CD4-positive, alpha-beta T cell (primary cell): ENCODE measurements at regions of chr4 and their contacts with region 1.

Region 1: GRCh38 chr4:36255577-36255976 is 11.3 kb upstream of the ARAP2 start:
- DNase-seq: peak; percentile 26 to 94 (median 48)
- ATAC-seq: peak; percentile 97
- H3K4me3 ChIP-seq: no peak overlapping the region
- H3K4me3 Mint-ChIP-seq: peak overlapping the region; percentile 56
- H3K27ac ChIP-seq: peak overlapping the region in 1 of 2 donors; percentile 46
- H3K27ac Mint-ChIP-seq: peak overlapping the region; percentile 50
- H3K4me1 ChIP-seq: peaks cover 15% of the 10 kb centered on the region
- H3K4me1 Mint-ChIP-seq: peaks cover 36% of the 10 kb centered on the region
- H3K27me3 ChIP-seq: no peaks in the 10 kb centered on the region
- H3K27me3 Mint-ChIP-seq: no peaks in the 10 kb centered on the region
- CTCF ChIP-seq: no peak

Region 2: DNA sequence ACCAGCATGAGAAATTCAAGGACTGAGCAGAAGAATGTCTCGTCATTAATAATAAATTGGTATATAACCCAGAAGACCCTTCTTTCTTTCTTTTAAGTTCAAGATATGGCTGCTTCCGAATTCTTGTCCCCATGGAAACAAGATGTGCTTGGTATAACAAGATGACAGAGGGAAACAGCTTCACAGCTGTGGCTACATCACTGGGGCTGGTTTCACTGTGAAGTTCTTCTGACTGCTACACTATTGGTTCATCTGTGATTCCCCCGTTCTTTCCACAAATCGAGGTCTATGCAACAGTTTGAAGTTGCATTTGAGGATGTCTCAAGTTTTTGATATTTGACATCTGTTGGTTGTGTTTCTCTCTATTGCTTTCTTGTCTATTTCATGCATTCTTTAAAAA is 13.5 kb after region 1 on chr4:
- CTCF ChIA-PET with region 1: no interaction called
- POLR2A ChIA-PET with region 1: interaction called, 10 read pairs
- intact Hi-C with region 1: no loop called
- DNase-seq: peak in 6 of 14 experiments; percentile 11 to 87 (median 58)
- ATAC-seq: peak; percentile 92
- H3K4me3 ChIP-seq: no peak overlapping the region
- H3K4me3 Mint-ChIP-seq: no peak overlapping the region
- H3K27ac ChIP-seq: peak overlapping the region in 1 of 2 donors; percentile 35
- H3K27ac Mint-ChIP-seq: peak overlapping the region; percentile 74
- H3K4me1 ChIP-seq: no peaks in the 10 kb centered on the region
- H3K4me1 Mint-ChIP-seq: peaks cover 42% of the 10 kb centered on the region
- H3K27me3 ChIP-seq: no peaks in the 10 kb centered on the region
- H3K27me3 Mint-ChIP-seq: no peaks in the 10 kb centered on the region
- CTCF ChIP-seq: no peak

Region 3: GRCh38 chr4:36285784-36286480 is 30.4 kb after region 1 on chr4:
- CTCF ChIA-PET with region 1: interaction called, 6 read pairs
- POLR2A ChIA-PET with region 1: interaction called, 5 read pairs
- intact Hi-C with region 1: loop called in 1 of 2 experiments (anchors 1 kb)
- DNase-seq: peak in 13 of 14 experiments; percentile 9 to 92 (median 41)
- ATAC-seq: peak; percentile 93
- H3K4me3 ChIP-seq: peak overlapping the region; percentile 15
- H3K4me3 Mint-ChIP-seq: peak overlapping the region; percentile 49
- H3K27ac ChIP-seq: peak overlapping the region; percentile 13 to 61
- H3K27ac Mint-ChIP-seq: peak overlapping the region; percentile 83
- H3K4me1 ChIP-seq: no peaks in the 10 kb centered on the region
- H3K4me1 Mint-ChIP-seq: peaks cover 20% of the 10 kb centered on the region
- H3K27me3 ChIP-seq: no peaks in the 10 kb centered on the region
- H3K27me3 Mint-ChIP-seq: no peaks in the 10 kb centered on the region
- CTCF ChIP-seq: no peak

Region 4: DNA sequence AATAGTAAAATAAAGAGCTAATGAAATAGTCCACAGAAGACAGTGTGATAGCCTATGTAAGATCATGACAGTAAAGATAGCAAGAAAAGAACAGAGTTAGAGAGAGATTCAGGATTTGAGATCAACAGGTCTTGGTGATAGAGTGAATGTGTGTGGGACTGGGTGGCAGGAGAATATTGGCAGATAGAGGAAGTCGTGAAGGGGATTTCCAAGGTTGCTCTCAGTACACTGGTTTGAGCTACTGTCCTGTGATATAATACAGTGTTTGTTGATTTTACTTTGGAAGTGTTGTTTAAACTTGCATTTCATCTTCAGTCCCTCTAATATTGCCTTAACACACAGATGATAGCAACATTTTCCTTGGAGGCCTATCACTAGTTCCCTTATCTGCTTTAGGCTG is 69.9 kb after region 1 on chr4:
- CTCF ChIA-PET with region 1: no interaction called
- POLR2A ChIA-PET with region 1: no interaction called
- intact Hi-C with region 1: loop called in 1 of 2 experiments (anchors 1 kb)
- DNase-seq: peak in 4 of 14 experiments; percentile 17 to 78 (median 70)
- ATAC-seq: peak; percentile 29
- H3K4me3 ChIP-seq: no peak overlapping the region
- H3K4me3 Mint-ChIP-seq: peak overlapping the region; percentile 1
- H3K27ac ChIP-seq: peak overlapping the region in 1 of 2 donors; percentile 4
- H3K27ac Mint-ChIP-seq: peak overlapping the region; percentile 28
- H3K4me1 ChIP-seq: peaks cover 24% of the 10 kb centered on the region
- H3K4me1 Mint-ChIP-seq: peaks cover 47% of the 10 kb centered on the region
- H3K27me3 ChIP-seq: no peaks in the 10 kb centered on the region
- H3K27me3 Mint-ChIP-seq: no peaks in the 10 kb centered on the region
- CTCF ChIP-seq: no peak

Region 5: DNA sequence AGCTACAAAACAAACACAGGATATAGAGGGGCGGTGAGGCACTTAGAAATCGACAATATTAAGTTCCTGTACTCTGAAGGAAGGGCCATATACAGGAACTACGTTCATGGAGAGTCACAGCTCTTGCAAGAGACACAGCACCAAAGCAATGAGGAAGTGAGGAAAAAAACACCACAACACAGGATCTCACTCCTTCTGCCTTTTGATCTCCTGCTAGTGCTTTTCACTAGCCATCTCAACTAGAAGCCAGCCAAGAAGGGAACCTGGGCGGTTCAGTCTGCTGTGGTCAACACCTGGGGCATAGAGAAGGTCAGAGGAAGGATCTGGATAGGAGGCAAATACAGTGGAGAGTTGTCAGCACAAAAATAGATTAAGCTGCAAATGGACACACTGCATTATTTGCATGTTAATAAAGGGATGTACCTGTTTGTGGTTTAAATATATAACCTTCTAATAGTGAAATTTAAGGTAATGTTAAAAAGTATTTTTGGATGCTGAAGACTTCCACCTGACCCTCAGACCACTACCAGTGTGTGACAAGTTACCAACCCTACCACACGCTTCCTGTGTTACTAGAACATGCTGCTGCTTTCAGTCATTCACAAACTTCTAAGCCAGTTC is 130.5 kb after region 1 on chr4:
- CTCF ChIA-PET with region 1: no interaction called
- POLR2A ChIA-PET with region 1: no interaction called
- intact Hi-C with region 1: loop called in 1 of 2 experiments (anchors 5 kb)
- DNase-seq: peak in 13 of 14 experiments; percentile 0 to 89 (median 30)
- ATAC-seq: peak; percentile 98
- H3K4me3 ChIP-seq: no peak overlapping the region
- H3K4me3 Mint-ChIP-seq: peak overlapping the region; percentile 36
- H3K27ac ChIP-seq: peak overlapping the region; percentile 39 to 44
- H3K27ac Mint-ChIP-seq: peak overlapping the region; percentile 79
- H3K4me1 ChIP-seq: peaks cover 9% of the 10 kb centered on the region
- H3K4me1 Mint-ChIP-seq: peaks cover 37% of the 10 kb centered on the region
- H3K27me3 ChIP-seq: no peaks in the 10 kb centered on the region
- H3K27me3 Mint-ChIP-seq: no peaks in the 10 kb centered on the region
- CTCF ChIP-seq: no peak

Region 6: GRCh38 chr4:36587909-36588472 is 332.4 kb after region 1 on chr4:
- CTCF ChIA-PET with region 1: no interaction called
- POLR2A ChIA-PET with region 1: no interaction called
- intact Hi-C with region 1: no loop called
- DNase-seq: no peak
- ATAC-seq: no peak
- H3K4me3 ChIP-seq: no peak overlapping the region
- H3K4me3 Mint-ChIP-seq: no peak overlapping the region
- H3K27ac ChIP-seq: no peak overlapping the region
- H3K27ac Mint-ChIP-seq: no peak overlapping the region
- H3K4me1 ChIP-seq: no peaks in the 10 kb centered on the region
- H3K4me1 Mint-ChIP-seq: no peaks in the 10 kb centered on the region
- H3K27me3 ChIP-seq: no peaks in the 10 kb centered on the region
- H3K27me3 Mint-ChIP-seq: peaks cover 3% of the 10 kb centered on the region
- CTCF ChIP-seq: no peak

Region 7: DNA sequence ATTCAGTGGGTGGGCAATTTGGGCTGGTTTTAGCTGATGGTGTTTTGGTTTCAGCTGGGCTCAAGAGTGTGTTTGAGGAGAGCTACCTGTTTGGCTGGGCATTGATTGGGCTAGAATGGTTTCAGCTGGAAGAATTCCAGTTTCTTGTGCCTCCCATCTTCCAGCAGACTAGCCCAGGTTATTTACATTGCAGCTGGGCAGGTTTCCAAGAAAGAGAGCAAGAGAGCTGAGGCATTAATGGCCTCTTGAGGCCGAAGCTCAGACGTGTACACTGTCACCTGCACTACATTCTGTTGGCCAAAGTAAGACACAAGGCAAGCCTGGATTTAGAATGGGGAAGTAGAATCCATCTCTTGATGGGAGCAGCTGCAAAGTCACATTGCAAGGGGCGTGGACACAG is 426.1 kb after region 1 on chr4:
- CTCF ChIA-PET with region 1: no interaction called
- POLR2A ChIA-PET with region 1: no interaction called
- intact Hi-C with region 1: no loop called
- DNase-seq: no peak
- ATAC-seq: no peak
- H3K4me3 ChIP-seq: no peak overlapping the region
- H3K4me3 Mint-ChIP-seq: no peak overlapping the region
- H3K27ac ChIP-seq: no peak overlapping the region
- H3K27ac Mint-ChIP-seq: no peak overlapping the region
- H3K4me1 ChIP-seq: no peaks in the 10 kb centered on the region
- H3K4me1 Mint-ChIP-seq: no peaks in the 10 kb centered on the region
- H3K27me3 ChIP-seq: no peaks in the 10 kb centered on the region
- H3K27me3 Mint-ChIP-seq: no peaks in the 10 kb centered on the region
- CTCF ChIP-seq: no peak

Region 8: DNA sequence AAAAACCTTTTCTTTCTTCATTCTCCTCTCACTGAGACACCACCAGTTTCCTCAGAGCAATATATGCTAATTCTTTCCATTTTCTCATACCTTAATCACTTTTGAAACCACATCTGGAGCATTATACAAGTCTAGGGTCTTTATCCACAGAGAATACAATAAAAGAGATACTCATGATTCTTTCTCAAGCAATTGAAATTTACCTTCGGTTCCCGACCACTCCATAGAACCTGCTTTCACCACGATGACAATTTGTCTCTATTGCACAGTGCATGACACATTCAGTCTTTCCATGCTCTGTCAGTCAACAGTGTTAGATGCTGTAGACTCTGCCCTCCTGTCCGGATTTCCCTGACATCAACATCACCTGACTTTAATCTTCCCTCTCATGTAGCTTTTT is 579.7 kb after region 1 on chr4:
- CTCF ChIA-PET with region 1: no interaction called
- POLR2A ChIA-PET with region 1: no interaction called
- intact Hi-C with region 1: no loop called
- DNase-seq: no peak
- ATAC-seq: no peak
- H3K4me3 ChIP-seq: no peak overlapping the region
- H3K4me3 Mint-ChIP-seq: no peak overlapping the region
- H3K27ac ChIP-seq: no peak overlapping the region
- H3K27ac Mint-ChIP-seq: no peak overlapping the region
- H3K4me1 ChIP-seq: no peaks in the 10 kb centered on the region
- H3K4me1 Mint-ChIP-seq: no peaks in the 10 kb centered on the region
- H3K27me3 ChIP-seq: no peaks in the 10 kb centered on the region
- H3K27me3 Mint-ChIP-seq: no peaks in the 10 kb centered on the region
- CTCF ChIP-seq: no peak